ENCODE measurements at regions of chr2 and their contacts with region 1.

Region 1: GRCh38 chr2:119407430-119408220 is 24.0 kb upstream of the TMEM37 start:
- DNase-seq: no peak
- ATAC-seq: peak; percentile 80
- H3K4me3 ChIP-seq: no peak overlapping the region
- H3K27ac ChIP-seq: no peak overlapping the region
- H3K4me1 ChIP-seq: no peaks in the 10 kb centered on the region
- H3K27me3 ChIP-seq: no peaks in the 10 kb centered on the region

Region 2: GRCh38 chr2:119476301-119477021 is 68.8 kb after region 1 on chr2:
- intact Hi-C with region 1: loop called (anchors 1 to 2 kb)
- DNase-seq: peak in 1 of 2 donors; percentile 65
- ATAC-seq: peak; percentile 73
- H3K4me3 ChIP-seq: no peak overlapping the region
- H3K27ac ChIP-seq: no peak overlapping the region
- H3K4me1 ChIP-seq: no peaks in the 10 kb centered on the region
- H3K27me3 ChIP-seq: no peaks in the 10 kb centered on the region

Region 3: DNA sequence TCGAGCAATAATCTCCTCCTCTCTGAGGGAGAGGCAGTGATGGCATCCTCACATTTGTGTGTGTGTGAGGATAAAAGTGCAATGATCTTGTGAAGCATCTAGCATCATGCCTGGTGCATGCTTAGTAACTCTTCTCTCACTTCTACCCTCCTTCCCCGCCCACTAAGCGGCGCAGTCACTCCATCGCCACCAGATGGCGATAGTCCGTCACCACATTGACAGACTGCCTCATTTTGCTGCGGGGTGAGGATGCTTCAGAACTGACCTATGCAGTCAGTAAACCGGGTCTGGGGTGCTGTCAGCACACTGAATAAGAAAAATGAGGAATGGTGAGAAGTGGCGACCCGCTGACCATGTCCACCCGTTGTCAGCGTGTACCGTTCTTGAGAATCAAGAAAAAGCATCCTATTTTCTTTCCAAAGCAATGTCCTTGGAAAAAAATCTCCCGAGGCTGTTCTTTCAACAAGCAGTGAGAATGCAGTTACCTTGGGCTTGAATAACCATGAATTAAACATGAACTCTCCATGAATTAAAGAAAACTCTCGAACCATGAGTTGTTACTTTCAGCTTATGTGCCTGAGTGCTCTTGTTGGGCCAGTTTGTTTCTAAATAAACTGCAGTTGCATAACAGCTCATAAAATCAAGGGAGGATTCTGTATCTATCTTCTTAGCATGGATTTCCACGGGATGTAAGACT is 234.1 kb after region 1 on chr2:
- intact Hi-C with region 1: loop called in 1 of 2 experiments (anchors 10 kb)
- DNase-seq: peak; percentile 75 to 90
- ATAC-seq: peak; percentile 91
- H3K4me3 ChIP-seq: no peak overlapping the region
- H3K27ac ChIP-seq: no peak overlapping the region
- H3K4me1 ChIP-seq: no peaks in the 10 kb centered on the region
- H3K27me3 ChIP-seq: no peaks in the 10 kb centered on the region

Region 4: GRCh38 chr2:119659601-119660342 is 252.1 kb after region 1 on chr2:
- intact Hi-C with region 1: loop called in 1 of 2 experiments (anchors 5 kb)
- DNase-seq: peak in 1 of 2 donors; percentile 53
- ATAC-seq: no peak
- H3K4me3 ChIP-seq: no peak overlapping the region
- H3K27ac ChIP-seq: no peak overlapping the region
- H3K4me1 ChIP-seq: no peaks in the 10 kb centered on the region
- H3K27me3 ChIP-seq: no peaks in the 10 kb centered on the region